ENCODE measurements at regions of chr6 and their contacts with region 1.

Region 1: GRCh38 chr6:21593412-21593926 is at the start of gene SOX4:
- DNase-seq: peak; percentile 94
- ATAC-seq: peak; percentile 77 to 79
- total RNA-seq, gene SOX4: 5.7 to 7.7 TPM

Region 2: DNA sequence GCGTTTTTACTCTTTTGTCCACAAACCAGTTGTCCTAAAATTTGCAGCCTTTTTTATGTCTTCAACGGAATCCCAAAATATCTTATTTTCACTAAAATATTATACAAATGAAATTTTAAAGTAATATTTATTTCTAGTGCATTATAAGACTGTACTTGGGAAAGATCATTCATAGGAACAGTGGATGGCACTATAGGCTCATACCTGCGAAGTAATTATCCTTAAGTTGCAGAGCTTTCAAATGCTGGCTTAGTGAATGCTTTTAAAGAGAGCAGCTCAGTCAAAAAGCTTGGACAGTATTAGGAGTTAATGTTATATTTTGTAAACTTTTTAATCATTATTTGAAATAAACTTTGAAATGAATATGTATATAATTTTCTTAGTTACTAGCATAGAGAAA is 804.3 kb before region 1 on chr6:
- intact Hi-C with region 1: loop called in 1 of 2 experiments (anchors 2 kb)
- DNase-seq: no peak
- ATAC-seq: peak in 1 of 2 donors; percentile 54

Region 3: GRCh38 chr6:21277601-21278374 is 315.7 kb before region 1 on chr6:
- intact Hi-C with region 1: loop called in 1 of 2 experiments (anchors 1 kb)
- DNase-seq: no peak
- ATAC-seq: peak; percentile 35 to 84

Region 4: DNA sequence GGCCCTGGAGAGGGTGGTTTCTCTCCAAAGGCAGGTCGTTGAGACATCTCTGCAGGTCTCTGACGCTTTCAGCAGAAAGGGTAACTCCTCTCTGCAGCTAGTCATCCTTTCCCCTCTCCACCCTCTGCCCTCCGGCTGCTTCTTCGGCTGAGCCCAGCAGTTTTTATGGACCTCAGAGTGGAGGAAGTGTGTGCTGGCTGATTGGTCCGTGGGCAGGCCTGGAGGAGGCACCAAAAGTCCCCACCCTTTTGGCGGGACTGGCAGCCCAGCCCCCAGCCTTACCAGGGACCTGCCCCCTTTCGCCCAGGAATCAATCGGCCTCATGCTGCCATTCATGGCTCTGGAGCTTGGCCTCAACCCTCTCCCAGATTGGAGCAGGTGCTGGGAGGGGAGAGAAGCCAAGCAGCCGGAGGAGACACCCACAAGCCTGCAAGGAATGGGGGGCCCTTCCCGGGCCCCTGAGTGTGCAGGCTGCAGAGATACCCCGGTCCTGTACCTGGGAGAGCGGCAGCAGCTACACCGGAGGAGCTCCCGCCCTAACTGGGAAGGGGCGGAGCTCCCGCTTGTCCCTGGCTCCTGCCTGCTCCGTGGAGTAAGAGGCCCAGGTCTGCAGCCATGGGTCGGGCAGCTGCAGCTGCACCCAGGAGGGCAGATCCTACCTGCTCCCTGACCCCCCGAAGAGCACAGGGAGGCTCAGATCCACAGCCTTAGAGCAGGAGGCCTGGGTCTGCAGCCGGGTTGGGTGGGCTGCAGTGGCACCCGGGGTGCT is 170.2 kb before region 1 on chr6:
- intact Hi-C with region 1: no loop called
- DNase-seq: no peak
- ATAC-seq: no peak

Region 5: GRCh38 chr6:21522797-21523456 is 70.5 kb before region 1 on chr6:
- intact Hi-C with region 1: no loop called
- DNase-seq: no peak
- ATAC-seq: peak; percentile 72 to 89

Region 6: DNA sequence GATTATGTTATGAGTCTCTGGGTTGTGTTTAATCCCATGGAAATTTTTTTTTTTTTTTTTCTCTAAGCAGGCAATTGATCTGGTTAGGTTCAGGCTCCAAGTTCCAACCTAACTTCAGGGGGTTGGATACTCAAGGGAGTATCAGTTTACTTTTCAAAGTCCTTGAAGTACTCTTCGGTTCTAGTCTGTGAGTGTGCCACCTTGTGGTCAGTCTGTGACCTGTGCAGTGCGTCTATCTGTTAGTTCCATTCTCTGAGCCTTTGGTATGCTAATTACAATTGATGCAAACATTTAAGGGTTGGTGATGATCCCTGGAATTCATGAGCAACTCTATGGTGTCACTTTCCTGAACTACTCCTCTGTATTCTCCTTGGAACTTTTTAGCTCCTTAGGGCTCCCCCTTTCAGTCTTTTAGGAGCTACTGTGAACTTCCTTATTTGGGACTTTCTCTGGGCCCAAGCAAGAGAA is 342.1 kb after region 1 on chr6:
- intact Hi-C with region 1: loop called in 1 of 2 experiments (anchors 10 kb)
- DNase-seq: no peak
- ATAC-seq: peak in 1 of 2 donors; percentile 51

Region 7: DNA sequence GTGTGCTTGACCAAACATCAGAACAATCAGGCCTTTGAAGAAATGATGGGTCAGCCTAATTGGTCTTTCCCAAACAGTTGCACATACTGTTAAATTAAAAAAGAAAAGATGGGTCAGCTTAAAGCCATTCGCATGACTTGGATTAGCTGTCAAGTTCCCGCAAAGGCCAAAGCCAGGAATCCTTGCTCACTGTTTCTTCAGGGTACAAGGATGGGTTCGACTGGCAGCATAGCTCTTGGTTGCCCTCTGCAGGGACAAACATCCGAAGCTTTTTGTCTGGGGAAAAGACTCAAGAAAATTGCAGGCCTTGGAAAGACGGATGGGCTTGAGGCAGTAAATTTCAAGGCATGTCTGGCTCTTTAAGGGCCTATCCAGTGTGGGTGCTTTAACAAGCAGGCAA is 1143.9 kb after region 1 on chr6:
- intact Hi-C with region 1: loop called in 1 of 2 experiments (anchors 10 kb)
- DNase-seq: peak; percentile 48
- ATAC-seq: peak; percentile 53 to 61